HepG2 (cell line): ENCODE measurements at regions of chr7 and their contacts with region 1.

Region 1: GRCh38 chr7:13262929-13263530 is 575.6 kb downstream of the ARL4A start:
- DNase-seq: peak; percentile 32
- ATAC-seq: peak; percentile 57
- H3K4me3 ChIP-seq: no peak overlapping the region
- H3K27ac ChIP-seq: no peak overlapping the region
- H3K4me1 ChIP-seq: no peaks in the 10 kb centered on the region
- H3K27me3 ChIP-seq: no peaks in the 10 kb centered on the region
- CTCF ChIP-seq: peak; percentile 64
- EP300 ChIP-seq: no peak
- POLR2A ChIP-seq: no peak
- RAD21 ChIP-seq: peak; percentile 64

Region 2: DNA sequence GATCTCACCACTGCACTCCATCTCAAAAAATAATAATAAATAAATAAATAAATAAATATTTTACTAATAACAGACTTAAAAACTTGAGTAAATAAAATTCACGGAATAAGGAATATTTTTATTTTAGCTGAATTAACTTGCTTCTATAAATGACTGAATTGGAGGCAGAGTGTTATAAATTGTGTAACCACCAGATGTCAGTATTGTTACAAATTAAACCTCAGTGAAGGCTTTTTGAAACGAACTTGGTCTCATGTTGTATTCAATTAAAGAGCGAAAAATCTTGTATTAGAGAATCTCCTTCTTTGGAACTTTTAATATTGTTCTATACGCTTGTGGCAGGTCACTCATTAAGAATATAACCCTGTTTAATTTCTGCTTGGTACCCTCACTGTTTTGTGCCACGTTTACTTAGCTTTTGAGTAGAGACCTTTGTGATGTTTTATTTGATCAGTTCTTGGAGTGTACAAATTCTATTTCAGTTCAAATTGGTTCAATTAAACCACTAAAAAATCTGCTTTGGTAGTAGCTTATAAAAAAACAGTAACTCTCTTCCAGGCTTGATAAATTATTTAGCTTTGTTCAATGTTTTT is 738.1 kb before region 1 on chr7:
- CTCF ChIA-PET with region 1: interaction called, 30 read pairs
- POLR2A ChIA-PET with region 1: no interaction called
- in situ Hi-C with region 1: loop called (anchors 5 kb)
- intact Hi-C with region 1: loop called (anchors 1 kb)
- DNase-seq: peak; percentile 33
- ATAC-seq: no peak
- H3K4me3 ChIP-seq: no peak overlapping the region
- H3K27ac ChIP-seq: no peak overlapping the region
- H3K4me1 ChIP-seq: no peaks in the 10 kb centered on the region
- H3K27me3 ChIP-seq: no peaks in the 10 kb centered on the region
- CTCF ChIP-seq: peak; percentile 62
- EP300 ChIP-seq: no peak
- POLR2A ChIP-seq: no peak
- RAD21 ChIP-seq: no peak

Region 3: DNA sequence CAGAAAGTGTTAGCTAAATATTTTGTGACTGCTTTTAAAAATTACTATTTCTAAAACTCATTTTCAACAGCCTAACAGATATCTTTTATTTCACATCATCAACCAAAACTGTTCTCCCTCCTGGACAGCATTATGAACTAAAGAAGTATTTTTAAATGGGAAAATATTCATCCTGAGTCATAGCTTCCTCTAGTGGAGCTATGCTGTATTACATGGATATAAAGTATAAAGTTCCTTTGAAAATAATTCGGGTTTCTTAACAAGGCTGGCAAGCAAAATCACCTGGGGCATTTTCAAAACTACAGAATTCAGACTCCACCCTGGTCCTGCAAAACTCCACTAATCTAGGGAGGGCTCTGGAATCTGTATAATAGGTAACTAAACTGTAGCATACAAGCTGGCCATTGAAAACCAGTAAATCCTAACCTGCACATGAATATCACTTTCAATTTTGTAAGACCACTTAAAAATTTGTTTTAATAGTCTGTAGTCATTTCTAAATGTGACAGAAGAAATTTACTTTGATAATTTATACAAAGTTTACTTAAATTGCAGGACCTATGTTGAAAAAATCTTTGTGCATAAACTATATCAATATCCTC is 639.0 kb before region 1 on chr7:
- CTCF ChIA-PET with region 1: interaction called, 5 read pairs
- POLR2A ChIA-PET with region 1: no interaction called
- in situ Hi-C with region 1: no loop called
- intact Hi-C with region 1: loop called (anchors 5 kb)
- DNase-seq: no peak
- ATAC-seq: peak; percentile 28; the same call in 1 of the 3 replicates
- H3K4me3 ChIP-seq: no peak overlapping the region
- H3K27ac ChIP-seq: no peak overlapping the region
- H3K4me1 ChIP-seq: no peaks in the 10 kb centered on the region
- H3K27me3 ChIP-seq: no peaks in the 10 kb centered on the region
- CTCF ChIP-seq: peak; percentile 48
- EP300 ChIP-seq: no peak
- POLR2A ChIP-seq: no peak
- RAD21 ChIP-seq: no peak

Region 4: GRCh38 chr7:13117103-13117502 is 145.9 kb before region 1 on chr7:
- CTCF ChIA-PET with region 1: no interaction called
- POLR2A ChIA-PET with region 1: no interaction called
- in situ Hi-C with region 1: no loop called
- intact Hi-C with region 1: loop called (anchors 2 kb)
- DNase-seq: peak; percentile 35
- ATAC-seq: peak; percentile 69
- H3K4me3 ChIP-seq: no peak overlapping the region
- H3K27ac ChIP-seq: no peak overlapping the region
- H3K4me1 ChIP-seq: peaks cover 10% of the 10 kb centered on the region; the same call in 1 of the 2 replicates
- H3K27me3 ChIP-seq: no peaks in the 10 kb centered on the region
- CTCF ChIP-seq: peak; percentile 70
- EP300 ChIP-seq: no peak
- POLR2A ChIP-seq: no peak
- RAD21 ChIP-seq: peak; percentile 65; the same call in 1 of the 2 replicates